ENCODE measurements at regions of chr20 and their contacts with region 1.

Region 1: DNA sequence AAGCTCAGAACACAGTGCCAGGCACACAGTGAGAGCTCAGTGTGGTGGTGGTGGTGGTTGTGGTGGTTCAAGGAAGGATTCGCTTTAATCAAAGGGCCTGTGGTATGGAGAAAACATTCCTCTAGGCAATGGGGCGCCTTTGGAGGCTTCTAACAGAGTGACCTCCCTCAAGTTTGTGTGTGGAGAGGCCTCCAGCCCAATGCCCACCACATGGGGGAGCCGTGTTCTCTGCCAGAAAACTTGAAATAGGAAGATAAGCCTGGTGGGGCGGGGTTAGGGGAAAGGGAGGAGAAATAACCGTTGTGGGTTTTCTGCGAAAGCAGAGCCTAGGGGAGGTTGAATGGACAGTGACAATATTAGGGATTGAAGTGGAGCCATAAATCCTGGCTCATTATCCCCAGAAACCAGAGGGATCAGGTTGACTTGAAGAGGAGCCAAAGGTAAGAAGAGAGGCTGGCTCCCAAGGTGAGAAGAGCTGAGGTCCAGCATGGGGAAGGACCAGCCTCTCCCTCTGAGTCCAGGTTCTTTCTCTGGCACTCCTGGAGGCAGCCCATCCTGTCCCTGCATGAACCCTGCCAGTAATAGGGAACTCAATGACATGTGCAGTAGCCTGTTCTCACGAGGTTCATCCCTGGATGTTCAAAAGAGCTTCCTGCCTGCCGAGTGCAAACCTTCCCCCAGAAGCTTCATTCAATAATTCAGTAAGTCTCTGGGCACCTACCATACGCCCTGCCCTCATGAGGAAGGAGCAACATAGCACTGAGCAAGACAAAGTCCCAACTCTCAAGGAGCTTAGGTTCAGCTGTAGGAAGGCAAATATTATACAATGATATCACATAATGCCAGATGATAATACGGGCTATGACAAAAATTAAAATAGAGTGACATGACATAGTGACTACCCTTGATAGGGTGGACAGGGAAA is 51.4 kb downstream of the TGM2 start:
- DNase-seq: peak in 1 of 2 donors; percentile 41
- ATAC-seq: no peak
- H3K4me3 ChIP-seq: no peak overlapping the region
- H3K27ac ChIP-seq: peak overlapping the region in 7 of 10 donors; percentile 6 to 60 (median 38)
- H3K4me1 ChIP-seq: peaks cover 26 to 58% (median 45%) of the 10 kb centered on the region in 9 donors
- H3K27me3 ChIP-seq: no peaks in the 10 kb centered on the region
- CTCF ChIP-seq: peak in 7 of 9 donors; percentile 7 to 51 (median 38)

Region 2: GRCh38 chr20:37984018-37984785 is 129.5 kb before region 1 on chr20:
- intact Hi-C with region 1: no loop called
- DNase-seq: peak; percentile 25 to 30
- ATAC-seq: peak in 7 of 8 donors; percentile 9 to 86 (median 53)
- H3K4me3 ChIP-seq: no peak overlapping the region
- H3K27ac ChIP-seq: peak overlapping the region in 9 of 10 donors; percentile 20 to 88 (median 68)
- H3K4me1 ChIP-seq: peaks cover 22 to 55% (median 34%) of the 10 kb centered on the region in 9 donors
- H3K27me3 ChIP-seq: no peaks in the 10 kb centered on the region
- CTCF ChIP-seq: no peak

Region 3: GRCh38 chr20:38065764-38066375 is 47.8 kb before region 1 on chr20:
- intact Hi-C with region 1: loop called in 3 of 10 experiments (anchors 5 kb)
- DNase-seq: peak; percentile 30 to 50
- ATAC-seq: peak in 4 of 8 donors; percentile 25 to 59 (median 43)
- H3K4me3 ChIP-seq: no peak overlapping the region
- H3K27ac ChIP-seq: peak overlapping the region in 8 of 10 donors; percentile 14 to 83 (median 72)
- H3K4me1 ChIP-seq: peaks cover 0 to 29% (median 23%) of the 10 kb centered on the region in 9 donors
- H3K27me3 ChIP-seq: no peaks in the 10 kb centered on the region
- CTCF ChIP-seq: no peak

Region 4: DNA sequence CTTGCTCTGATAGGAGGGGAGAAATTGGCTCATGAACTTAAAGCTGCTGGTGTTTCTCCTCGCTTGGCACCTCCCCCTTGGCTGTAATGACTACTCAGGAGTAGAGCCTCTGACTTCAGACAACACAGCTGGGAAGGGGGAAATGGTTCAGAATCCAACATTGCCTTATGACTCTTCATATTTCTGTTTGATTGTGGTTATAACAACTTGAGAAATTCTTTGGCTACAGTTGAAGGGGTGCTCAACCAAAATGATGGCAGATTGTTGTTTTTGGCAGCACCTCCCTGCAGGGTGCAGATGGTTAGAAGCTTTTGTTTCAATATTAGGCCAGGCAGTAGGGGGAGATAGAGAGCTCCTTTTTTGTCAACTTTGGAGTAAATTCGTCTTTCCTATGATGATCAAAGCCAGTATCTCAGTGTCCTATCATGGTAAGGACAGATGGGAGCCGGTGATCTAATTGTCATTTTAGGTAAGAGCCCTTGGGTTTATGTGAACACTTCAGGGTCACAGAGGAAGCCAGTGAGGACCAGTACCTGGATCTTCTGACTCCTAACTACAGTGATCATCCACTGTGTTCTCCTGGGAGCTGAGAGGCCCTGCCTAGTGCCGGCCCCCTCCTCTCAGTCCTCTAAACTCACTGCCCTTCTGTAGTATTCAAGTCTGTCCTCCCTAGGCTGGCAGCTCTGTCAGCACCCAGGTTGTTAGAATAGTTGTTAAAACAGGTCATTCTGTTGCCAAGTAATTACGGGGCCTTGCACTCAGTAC is 40.2 kb before region 1 on chr20:
- intact Hi-C with region 1: loop called in 4 of 10 experiments (anchors 1 to 5 kb)
- DNase-seq: peak; percentile 30 to 85
- ATAC-seq: peak; percentile 72 to 88 (median 82)
- H3K4me3 ChIP-seq: peak overlapping the region in 1 of 10 donors; percentile 3
- H3K27ac ChIP-seq: peak overlapping the region; percentile 57 to 91 (median 82)
- H3K4me1 ChIP-seq: peaks cover 8 to 61% (median 41%) of the 10 kb centered on the region in 9 donors
- H3K27me3 ChIP-seq: no peaks in the 10 kb centered on the region
- CTCF ChIP-seq: peak; percentile 72 to 91 (median 79)

Region 5: DNA sequence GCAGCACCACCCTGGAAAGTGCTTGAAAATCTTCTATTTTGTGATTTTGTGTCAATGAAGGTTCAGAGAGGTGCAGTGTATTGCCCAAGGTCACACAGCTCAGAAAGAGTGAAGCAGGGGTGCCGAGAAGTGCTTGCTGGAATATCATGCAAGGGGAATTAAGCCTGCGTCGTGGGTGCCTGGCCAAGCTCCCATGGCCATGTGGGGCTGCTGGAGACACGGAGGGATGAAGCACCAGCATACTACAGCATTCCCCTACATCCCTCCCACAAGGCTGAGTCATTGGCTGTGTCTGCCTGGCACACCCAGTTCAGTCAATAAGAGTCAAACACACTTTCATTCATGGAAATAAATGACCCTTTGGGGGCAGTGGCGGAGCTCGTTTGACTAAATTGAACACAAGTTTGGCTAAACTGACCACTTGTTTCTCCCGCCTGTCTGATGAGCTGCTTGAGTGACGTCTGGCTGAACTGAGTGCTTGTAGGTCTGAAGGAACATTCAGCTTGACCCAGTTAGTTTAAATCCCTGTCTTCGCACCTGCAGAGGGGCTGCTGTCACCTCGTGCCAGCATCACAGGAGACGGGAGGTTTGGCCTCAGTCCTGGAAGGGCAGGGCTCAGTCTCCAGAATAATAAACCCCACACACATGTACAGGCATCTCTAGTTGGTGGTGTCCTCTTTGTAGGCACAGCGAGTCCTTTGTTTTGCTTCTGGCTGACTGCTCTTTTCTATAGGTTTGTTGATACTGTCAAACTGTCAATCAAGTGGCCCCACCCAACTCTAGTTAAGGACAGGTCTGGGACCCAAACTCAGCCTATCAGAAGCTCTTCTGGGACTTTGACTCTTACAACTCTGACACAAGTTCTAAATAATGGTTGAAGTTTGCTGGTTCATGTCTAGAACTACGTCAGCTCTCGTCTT is 59.8 kb after region 1 on chr20:
- intact Hi-C with region 1: loop called in 3 of 10 experiments (anchors 2 to 5 kb)
- DNase-seq: peak in 1 of 2 donors; percentile 39
- ATAC-seq: peak in 5 of 8 donors; percentile 38 to 73 (median 43)
- H3K4me3 ChIP-seq: no peak overlapping the region
- H3K27ac ChIP-seq: no peak overlapping the region
- H3K4me1 ChIP-seq: peaks cover 2 to 40% (median 14%) of the 10 kb centered on the region in 9 donors
- H3K27me3 ChIP-seq: no peaks in the 10 kb centered on the region
- CTCF ChIP-seq: no peak

Measured in heart right ventricle (tissue), 16 donors.